Common myeloid progenitor, CD34-positive (primary cell): ENCODE measurements at regions of chr15 and their contacts with region 1.

Region 1: DNA sequence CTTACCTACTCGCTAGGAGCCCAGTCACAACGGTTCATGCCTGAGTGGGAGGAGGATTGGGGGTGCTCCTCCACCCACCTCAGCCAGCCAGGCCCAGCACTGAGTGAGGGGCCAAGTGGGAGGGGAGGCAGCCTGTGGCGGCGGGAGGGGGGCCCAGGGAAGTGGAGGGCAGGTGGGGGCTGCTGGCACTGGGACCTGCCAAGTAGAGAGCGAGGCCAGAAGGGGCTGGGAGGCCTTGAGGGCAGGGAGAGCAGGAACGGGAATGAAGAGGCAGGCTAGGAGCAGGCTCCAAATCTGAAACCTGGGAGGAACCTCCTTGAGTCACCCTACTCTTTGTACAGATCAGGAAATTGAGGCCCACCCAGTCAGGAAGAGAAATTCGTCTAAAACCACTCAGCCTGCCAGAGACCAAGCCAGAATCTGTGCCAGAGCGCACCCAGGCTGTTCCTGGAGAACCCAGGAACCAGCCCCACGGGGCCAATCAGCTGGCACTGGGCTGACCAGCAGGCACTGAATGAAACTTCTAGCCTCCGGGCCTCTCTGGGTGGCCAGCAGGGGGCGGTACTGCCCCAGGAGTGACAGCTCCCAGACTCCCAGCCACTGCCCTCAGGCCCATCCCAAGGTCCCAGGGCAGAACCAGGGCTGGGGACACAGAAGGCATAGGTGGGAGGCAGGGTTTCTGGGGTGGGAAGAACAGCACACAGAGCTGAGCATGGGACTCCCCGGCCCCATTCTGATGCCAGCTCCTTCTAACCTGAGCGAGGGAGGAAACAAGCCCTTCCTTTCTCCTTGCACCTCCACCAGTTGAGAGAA is 14.8 kb upstream of the CYP11A1 start:
- DNase-seq: peak; percentile 59 to 68 (median 65)
- H3K4me3 ChIP-seq: no peak overlapping the region
- H3K27ac ChIP-seq: no peak overlapping the region
- H3K4me1 ChIP-seq: peaks cover 0 to 61% (median 51%) of the 10 kb centered on the region in 4 experiments
- H3K27me3 ChIP-seq: no peaks in the 10 kb centered on the region

Region 2: DNA sequence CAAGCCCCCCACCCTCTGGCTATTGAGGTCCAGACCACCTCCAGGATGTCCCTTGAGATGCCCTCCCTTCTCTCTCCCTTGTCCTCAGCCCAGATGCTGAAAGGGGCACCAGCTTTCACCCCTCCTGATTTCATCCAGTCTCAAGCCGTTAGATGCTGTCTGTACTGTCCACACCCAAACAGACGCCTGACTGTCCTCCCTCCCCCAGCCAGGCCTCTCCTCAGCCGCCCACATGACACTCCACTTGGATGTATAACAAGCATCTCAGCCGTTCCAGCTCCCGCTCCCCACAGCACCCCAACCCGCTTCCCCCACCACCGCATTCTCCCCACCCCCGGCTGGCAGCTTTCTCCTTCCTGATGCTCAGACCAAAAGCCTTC is 10.2 kb after region 1 on chr15:
- CTCF ChIA-PET with region 1: interaction called, 10 read pairs
- POLR2A ChIA-PET with region 1: interaction called, 4 read pairs
- DNase-seq: peak in 1 of 3 donors; percentile 17
- H3K4me3 ChIP-seq: peak overlapping the region in 1 of 7 experiments; percentile 6
- H3K27ac ChIP-seq: peak overlapping the region in 1 of 2 experiments; percentile 50
- H3K4me1 ChIP-seq: peaks cover 0 to 84% (median 79%) of the 10 kb centered on the region in 4 experiments
- H3K27me3 ChIP-seq: no peaks in the 10 kb centered on the region

Region 3: DNA sequence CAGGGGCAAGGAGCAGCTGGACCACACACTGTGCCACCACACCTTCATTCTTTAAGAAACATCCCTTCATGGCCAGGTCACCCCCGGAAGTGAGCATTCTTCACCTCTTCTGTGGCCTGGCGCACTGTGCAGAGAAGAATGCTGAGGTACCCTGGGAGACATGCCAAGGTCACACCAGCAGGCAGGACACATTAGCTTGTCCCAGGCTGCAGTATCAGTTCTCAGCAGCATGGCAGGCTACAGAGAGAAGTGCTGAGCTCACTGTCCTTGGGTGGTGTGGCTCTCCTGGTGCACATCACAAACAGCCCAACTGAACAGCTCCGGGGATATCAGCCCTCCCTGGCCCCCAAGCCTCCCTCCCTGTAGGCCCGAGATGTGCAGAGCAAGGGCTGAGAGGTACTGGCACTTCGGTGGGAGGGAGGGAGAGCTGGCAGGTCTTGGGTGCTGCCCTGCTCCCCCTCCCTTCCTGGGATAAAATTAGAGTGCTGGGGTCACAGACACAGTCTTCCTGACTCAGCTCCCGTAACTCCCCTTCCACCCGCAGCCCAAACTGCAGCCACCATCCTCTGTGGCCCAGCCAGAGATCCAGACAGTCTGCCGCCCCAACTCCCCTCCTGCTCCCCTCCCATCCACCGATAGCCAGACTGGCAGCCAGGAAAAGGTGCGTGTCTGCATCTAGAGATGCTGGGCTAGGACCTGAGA is 38.1 kb after region 1 on chr15:
- CTCF ChIA-PET with region 1: interaction called, 10 read pairs
- POLR2A ChIA-PET with region 1: no interaction called
- DNase-seq: no peak
- H3K4me3 ChIP-seq: no peak overlapping the region
- H3K27ac ChIP-seq: no peak overlapping the region
- H3K4me1 ChIP-seq: peaks cover 0 to 58% (median 35%) of the 10 kb centered on the region in 4 experiments
- H3K27me3 ChIP-seq: no peaks in the 10 kb centered on the region

Region 4: DNA sequence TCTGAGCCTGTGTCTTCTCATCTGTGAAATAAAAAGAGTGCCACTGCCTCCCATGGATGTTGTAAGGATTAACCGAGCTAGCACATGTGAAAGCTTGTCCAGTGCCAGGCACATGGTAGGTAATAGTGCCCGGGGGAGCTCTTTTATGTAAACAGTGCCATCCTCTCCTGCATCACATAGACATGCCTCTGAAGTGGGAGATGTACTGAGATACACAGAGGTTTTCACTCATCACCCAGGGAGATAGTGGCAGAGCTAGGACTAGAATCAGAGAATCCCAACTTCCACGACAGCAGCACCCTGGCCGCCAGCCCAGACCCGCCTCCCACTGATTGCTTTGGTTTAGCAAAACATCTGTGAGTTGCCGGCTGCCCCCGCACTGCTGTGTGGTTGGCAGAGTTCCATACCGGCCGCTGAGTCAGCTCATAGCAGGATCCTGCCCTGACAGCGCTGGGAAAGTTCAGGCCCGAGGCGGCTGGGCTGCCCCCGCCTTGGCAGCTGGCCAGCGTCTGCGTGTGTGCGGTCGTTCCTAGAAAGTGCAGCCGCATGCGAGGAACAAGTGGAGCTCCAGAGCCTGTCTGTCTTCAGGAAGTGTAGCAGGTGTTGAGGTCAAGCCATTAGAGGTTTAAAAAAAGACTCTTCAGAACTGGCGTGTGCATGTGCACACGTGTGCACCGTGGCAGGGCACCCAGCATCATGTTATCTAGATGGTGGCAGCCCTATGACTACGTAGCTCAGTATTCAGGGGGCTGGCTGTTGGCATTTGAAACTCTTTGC is 163.9 kb after region 1 on chr15:
- CTCF ChIA-PET with region 1: interaction called, 10 read pairs
- POLR2A ChIA-PET with region 1: no interaction called
- DNase-seq: peak; percentile 98 to 99 (median 99)
- H3K4me3 ChIP-seq: peak overlapping the region in 3 of 7 experiments; percentile 7 to 64 (median 26)
- H3K27ac ChIP-seq: no peak overlapping the region
- H3K4me1 ChIP-seq: peaks cover 26 to 59% (median 47%) of the 10 kb centered on the region in 4 experiments
- H3K27me3 ChIP-seq: no peaks in the 10 kb centered on the region

Region 5: GRCh38 chr15:74735305-74735704 is 353.1 kb after region 1 on chr15:
- CTCF ChIA-PET with region 1: no interaction called
- POLR2A ChIA-PET with region 1: no interaction called
- DNase-seq: no peak
- H3K4me3 ChIP-seq: no peak overlapping the region
- H3K27ac ChIP-seq: no peak overlapping the region
- H3K4me1 ChIP-seq: peaks cover 0 to 10% (median 2%) of the 10 kb centered on the region in 4 experiments
- H3K27me3 ChIP-seq: no peaks in the 10 kb centered on the region